Endothelial cell of umbilical vein (primary cell): ENCODE measurements at regions of chr16 and their contacts with region 1.

Region 1: DNA sequence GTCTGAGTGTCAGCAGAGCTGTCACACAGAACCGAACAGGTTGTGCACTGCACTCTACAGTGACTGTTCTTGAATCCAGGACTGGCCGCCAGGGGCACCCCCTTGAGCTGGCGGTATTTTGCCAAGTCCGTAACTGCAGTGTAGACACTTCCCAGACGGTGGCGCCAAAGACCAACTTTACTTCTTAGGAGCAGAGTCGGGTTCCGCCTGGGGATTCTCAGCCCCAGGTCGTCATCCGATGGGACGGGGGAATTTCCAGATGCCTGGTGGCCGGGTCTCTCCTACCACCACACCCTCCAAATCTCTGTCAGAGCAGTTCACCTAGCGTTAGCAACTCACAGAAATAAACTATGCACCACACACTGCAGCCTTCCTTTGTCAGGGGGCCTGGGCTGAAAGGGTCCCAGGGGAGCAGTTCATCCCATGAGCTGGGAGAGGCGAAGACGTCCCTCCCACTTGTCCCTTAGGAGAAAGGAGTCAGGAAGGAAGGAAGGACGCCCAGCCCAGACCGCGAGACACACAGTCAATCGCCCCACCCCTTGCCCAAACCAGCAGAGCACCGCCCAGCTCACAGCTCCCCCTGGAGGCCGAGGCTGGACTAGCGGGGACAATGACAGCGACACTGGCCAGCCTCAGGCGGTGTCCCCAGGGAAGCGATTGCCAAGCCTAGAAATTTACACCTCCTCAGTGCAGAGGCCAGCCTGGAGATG is 7.4 kb upstream of the RIPOR1 start:
- DNase-seq: peak; percentile 97
- H3K4me3 ChIP-seq: peak overlapping the region in 2 of 3 experiments; percentile 30 to 45
- H3K27ac ChIP-seq: peak overlapping the region; percentile 89
- H3K4me1 ChIP-seq: peaks cover 11% of the 10 kb centered on the region
- H3K27me3 ChIP-seq: no peaks in the 10 kb centered on the region
- CTCF ChIP-seq: peak; percentile 83 to 100
- POLR2A ChIP-seq: peak; percentile 68

Region 2: DNA sequence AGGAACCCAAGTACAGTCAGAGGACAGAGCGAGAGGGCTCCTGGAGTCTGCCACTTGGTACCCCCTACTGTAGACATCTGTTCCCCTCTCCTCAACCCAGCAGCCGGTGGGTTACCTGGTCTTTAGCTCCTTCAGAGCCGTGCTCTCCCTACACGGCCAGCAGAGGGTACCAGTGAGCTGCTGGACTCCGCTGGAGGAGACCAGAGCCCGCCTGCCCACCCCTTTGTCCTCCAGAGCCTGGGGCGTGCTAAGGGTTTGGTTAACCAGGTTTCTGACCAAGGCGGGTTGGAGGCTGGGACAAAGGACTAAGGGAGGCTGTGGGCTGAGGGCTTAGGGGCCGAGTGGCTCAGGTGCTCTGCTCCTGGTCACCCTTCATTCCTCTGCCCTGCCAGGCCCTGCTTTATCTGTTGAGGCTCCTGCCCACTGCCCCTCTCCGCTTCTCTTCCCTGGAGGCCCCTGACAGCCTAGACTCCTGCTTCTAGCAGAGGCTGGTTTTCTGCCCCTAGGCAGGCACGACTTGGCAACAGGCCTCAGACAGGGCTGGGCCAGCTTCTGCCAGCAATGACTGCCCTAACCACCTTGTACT is 93.0 kb before region 1 on chr16:
- CTCF ChIA-PET with region 1: interaction called, 28 read pairs
- POLR2A ChIA-PET with region 1: no interaction called
- dilution Hi-C with region 1: no loop called
- intact Hi-C with region 1: no loop called
- DNase-seq: peak; percentile 54
- H3K4me3 ChIP-seq: no peak overlapping the region
- H3K27ac ChIP-seq: no peak overlapping the region
- H3K4me1 ChIP-seq: peaks cover 8% of the 10 kb centered on the region
- H3K27me3 ChIP-seq: peaks cover 36 to 43% of the 10 kb centered on the region in 2 experiments
- CTCF ChIP-seq: peak; percentile 82 to 94
- POLR2A ChIP-seq: no peak

Region 3: GRCh38 chr16:67499106-67499505 is 22.1 kb before region 1 on chr16:
- CTCF ChIA-PET with region 1: interaction called, 247 read pairs
- POLR2A ChIA-PET with region 1: no interaction called
- dilution Hi-C with region 1: no loop called
- intact Hi-C with region 1: no loop called
- DNase-seq: no peak
- H3K4me3 ChIP-seq: no peak overlapping the region
- H3K27ac ChIP-seq: no peak overlapping the region
- H3K4me1 ChIP-seq: no peaks in the 10 kb centered on the region
- H3K27me3 ChIP-seq: no peaks in the 10 kb centered on the region
- CTCF ChIP-seq: no peak
- POLR2A ChIP-seq: no peak

Region 4: DNA sequence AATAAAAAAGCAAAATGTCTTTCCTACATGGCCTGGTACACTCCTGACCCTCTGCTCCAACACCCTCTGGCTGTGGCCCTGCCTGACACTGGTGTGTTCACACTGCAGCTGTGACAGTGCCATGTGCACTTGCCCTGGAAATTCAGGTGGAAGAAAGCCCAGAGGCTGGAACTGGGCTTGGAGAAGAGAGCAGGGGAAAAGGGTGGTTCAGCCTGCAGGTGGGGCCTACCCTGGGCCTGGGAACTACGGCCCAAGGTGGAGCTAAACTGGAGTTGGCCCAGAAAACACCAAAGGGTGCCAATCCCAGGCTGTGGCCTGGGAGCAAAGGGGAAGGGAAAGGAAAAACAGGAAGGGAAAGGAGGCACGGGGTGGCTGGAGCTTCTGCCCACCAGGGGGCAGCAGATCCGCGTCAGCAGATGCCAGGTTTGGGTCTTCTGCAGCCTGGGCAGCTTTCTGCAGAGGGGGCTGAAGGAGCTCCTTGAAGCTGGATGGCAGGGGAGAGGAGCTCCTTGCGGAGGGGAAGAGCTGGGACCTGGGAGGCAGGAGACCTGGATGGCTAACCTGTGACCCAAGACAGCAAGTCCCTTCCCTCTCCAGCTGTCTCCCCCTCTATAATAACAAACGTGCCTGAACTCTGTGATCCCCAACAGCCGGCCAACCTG is 25.6 kb after region 1 on chr16:
- CTCF ChIA-PET with region 1: interaction called, 246 read pairs
- POLR2A ChIA-PET with region 1: interaction called, 6 read pairs
- dilution Hi-C with region 1: no loop called
- intact Hi-C with region 1: loop called (anchors 1 kb)
- DNase-seq: peak; percentile 89
- H3K4me3 ChIP-seq: no peak overlapping the region
- H3K27ac ChIP-seq: peak overlapping the region; percentile 83
- H3K4me1 ChIP-seq: peaks cover 23% of the 10 kb centered on the region
- H3K27me3 ChIP-seq: no peaks in the 10 kb centered on the region
- CTCF ChIP-seq: peak; percentile 93 to 97
- POLR2A ChIP-seq: peak; percentile 50

Region 5: DNA sequence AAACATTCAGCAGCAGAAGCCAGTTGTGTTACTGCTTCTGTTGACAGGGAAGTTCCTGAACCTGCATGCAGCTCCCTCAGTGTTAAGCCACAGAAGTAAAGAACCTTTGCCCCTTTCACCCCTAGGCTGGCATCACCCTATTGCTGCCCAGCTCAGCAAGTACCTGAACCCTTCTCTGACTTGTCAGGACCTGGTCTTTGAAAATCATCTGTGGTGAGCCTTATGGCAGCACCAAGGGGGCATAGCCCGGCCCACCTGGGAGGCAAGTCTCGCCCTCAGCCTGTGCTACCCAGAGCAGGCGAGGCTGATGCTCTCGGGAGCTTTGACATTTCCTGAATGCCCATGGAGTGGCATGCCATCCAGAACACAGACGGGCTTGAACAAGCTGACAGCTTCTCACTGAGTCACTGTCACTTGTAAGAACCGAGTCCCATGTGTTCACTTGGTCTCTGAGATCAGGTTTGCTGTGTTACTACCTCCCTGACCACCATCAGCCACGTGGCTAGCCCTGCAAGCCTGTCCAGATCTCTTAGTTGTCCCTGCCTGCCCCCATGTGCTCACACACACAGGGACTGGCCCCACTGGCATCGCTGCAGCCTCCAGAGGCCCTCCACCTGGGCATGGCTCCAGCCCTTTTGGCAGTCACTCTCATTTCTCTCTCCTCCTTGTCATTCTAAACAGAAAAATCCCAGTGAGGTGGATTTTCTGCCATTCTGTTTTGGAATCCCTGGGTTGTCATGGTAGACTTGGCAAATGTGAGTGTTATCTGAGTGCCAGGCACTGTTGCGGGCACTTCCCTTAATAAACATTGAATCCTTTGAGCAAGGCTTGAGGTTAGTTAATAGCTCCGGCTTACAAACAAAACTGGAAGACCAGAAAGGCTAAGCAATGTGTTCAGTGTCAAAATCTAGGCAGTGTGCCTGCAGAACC is 120.8 kb after region 1 on chr16:
- CTCF ChIA-PET with region 1: interaction called, 141 read pairs
- POLR2A ChIA-PET with region 1: no interaction called
- dilution Hi-C with region 1: no loop called
- intact Hi-C with region 1: loop called (anchors 1 kb)
- DNase-seq: peak; percentile 52
- H3K4me3 ChIP-seq: no peak overlapping the region
- H3K27ac ChIP-seq: no peak overlapping the region
- H3K4me1 ChIP-seq: no peaks in the 10 kb centered on the region
- H3K27me3 ChIP-seq: no peaks in the 10 kb centered on the region
- CTCF ChIP-seq: no peak
- POLR2A ChIP-seq: no peak

Region 6: DNA sequence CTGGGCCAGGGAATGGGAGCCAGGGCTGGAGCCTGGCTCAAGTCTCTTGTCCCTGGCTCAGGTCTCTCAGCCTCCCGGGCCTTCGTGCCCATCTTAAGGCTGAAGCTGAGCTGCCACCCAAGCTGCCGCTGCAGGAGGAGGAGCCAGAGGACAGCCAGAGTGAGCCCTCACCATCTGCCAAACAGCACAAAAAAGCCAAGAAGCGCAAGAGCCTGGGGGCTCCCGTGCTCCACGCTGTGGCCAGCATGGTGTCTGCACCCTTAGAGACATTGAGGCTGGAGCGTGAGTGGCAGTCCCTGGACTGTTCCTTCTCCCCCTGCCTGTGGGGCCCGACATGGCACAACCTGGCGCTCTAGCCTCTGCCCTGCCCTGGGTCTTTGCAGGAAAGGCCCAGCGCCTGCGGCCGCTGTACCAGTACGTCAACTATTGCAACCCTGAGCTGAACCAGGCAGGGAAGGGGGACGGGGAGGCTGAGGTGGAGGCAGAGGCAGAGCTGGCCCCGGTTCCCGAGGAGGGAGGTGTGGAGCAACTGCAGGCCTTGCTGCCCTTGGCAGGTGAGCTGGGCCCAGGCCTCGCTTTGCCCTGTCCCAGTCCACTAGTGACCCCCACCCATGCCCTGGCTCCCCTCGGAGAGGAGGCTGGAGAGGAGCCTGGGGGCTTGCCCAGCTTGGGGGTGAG is 146.7 kb after region 1 on chr16:
- CTCF ChIA-PET with region 1: interaction called, 163 read pairs
- POLR2A ChIA-PET with region 1: interaction called, 4 read pairs
- dilution Hi-C with region 1: no loop called
- intact Hi-C with region 1: loop called (anchors 1 kb)
- DNase-seq: peak; percentile 92
- H3K4me3 ChIP-seq: no peak overlapping the region
- H3K27ac ChIP-seq: no peak overlapping the region
- H3K4me1 ChIP-seq: peaks cover 17% of the 10 kb centered on the region
- H3K27me3 ChIP-seq: no peaks in the 10 kb centered on the region
- CTCF ChIP-seq: peak; percentile 85 to 98
- POLR2A ChIP-seq: no peak

Region 7: GRCh38 chr16:67928561-67929364 is 407.5 kb after region 1 on chr16:
- CTCF ChIA-PET with region 1: interaction called, 6 read pairs
- POLR2A ChIA-PET with region 1: no interaction called
- dilution Hi-C with region 1: no loop called
- intact Hi-C with region 1: loop called (anchors 10 kb)
- DNase-seq: peak; percentile 50
- H3K4me3 ChIP-seq: no peak overlapping the region
- H3K27ac ChIP-seq: no peak overlapping the region
- H3K4me1 ChIP-seq: peaks cover 10% of the 10 kb centered on the region
- H3K27me3 ChIP-seq: no peaks in the 10 kb centered on the region
- CTCF ChIP-seq: peak; percentile 87 to 93
- POLR2A ChIP-seq: no peak